A673 (cell line): ENCODE measurements at regions of chr7 and their contacts with region 1.

Region 1: GRCh38 chr7:114426382-114427223 is 12.0 kb downstream of the FOXP2 start:
- DNase-seq: peak; percentile 19
- H3K4me3 ChIP-seq: no peak overlapping the region
- H3K27ac ChIP-seq: no peak overlapping the region
- H3K4me1 ChIP-seq: no peaks in the 10 kb centered on the region
- H3K27me3 ChIP-seq: peaks cover 31% of the 10 kb centered on the region
- CTCF ChIP-seq: peak; percentile 43

Region 2: GRCh38 chr7:114519240-114519639 is 92.6 kb after region 1 on chr7:
- CTCF ChIA-PET with region 1: no interaction called
- POLR2A ChIA-PET with region 1: no interaction called
- intact Hi-C with region 1: no loop called
- DNase-seq: peak; percentile 9
- H3K4me3 ChIP-seq: no peak overlapping the region
- H3K27ac ChIP-seq: no peak overlapping the region
- H3K4me1 ChIP-seq: no peaks in the 10 kb centered on the region
- H3K27me3 ChIP-seq: peaks cover 14% of the 10 kb centered on the region
- CTCF ChIP-seq: no peak

Region 3: GRCh38 chr7:114663502-114663901 is 236.9 kb after region 1 on chr7:
- CTCF ChIA-PET with region 1: no interaction called
- POLR2A ChIA-PET with region 1: no interaction called
- intact Hi-C with region 1: loop called (anchors 10 kb)
- DNase-seq: peak; percentile 35
- H3K4me3 ChIP-seq: no peak overlapping the region
- H3K27ac ChIP-seq: no peak overlapping the region
- H3K4me1 ChIP-seq: peaks cover 5% of the 10 kb centered on the region
- H3K27me3 ChIP-seq: no peaks in the 10 kb centered on the region
- CTCF ChIP-seq: peak; percentile 52